Heart left ventricle (tissue), 16 donors: ENCODE measurements at regions of chr21 and their contacts with region 1.

Region 1: DNA sequence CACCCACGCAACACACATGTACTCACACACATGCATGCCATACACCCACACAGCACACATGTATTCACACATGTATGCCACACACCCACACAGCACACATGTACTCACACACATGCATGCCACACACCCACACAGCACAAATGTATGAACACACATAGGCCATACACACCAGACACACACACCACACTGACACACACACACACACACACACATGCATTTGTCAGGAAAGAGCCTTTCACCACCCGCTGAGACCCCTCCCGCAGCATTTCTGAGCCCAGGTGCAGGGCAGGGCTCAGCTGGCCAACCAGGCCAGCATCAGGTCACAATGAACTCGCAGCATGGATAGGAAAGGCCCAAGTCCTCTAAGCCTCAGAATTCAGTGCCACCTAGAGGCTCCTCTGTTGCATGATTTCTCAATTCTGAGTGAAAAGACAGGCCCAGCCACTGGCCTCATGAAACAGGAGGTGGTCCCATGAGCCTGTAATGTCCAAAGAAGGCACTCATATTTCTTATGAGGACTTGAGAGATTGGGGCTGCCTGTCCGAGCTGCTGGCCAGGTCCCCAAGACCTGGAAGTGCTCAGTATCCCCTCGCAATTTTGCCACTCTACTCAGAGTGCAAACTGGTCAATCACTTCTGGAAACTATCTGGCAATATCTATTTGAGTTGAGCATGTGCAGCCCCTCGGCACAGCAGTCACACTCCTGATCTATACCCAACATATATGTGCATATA is 57.3 kb downstream of the PSMG1 start:
- DNase-seq: peak in 4 of 5 donors; percentile 46 to 62 (median 59)
- ATAC-seq: peak; percentile 64 to 98 (median 95)
- H3K4me3 ChIP-seq: no peak overlapping the region
- H3K27ac ChIP-seq: peak overlapping the region in 2 of 12 donors; percentile 10 to 48
- H3K4me1 ChIP-seq: peaks cover 0 to 19% (median 7%) of the 10 kb centered on the region in 12 donors
- H3K27me3 ChIP-seq: no peaks in the 10 kb centered on the region
- CTCF ChIP-seq: peak; percentile 48 to 76 (median 63)
- POLR2A ChIP-seq: no peak

Region 2: DNA sequence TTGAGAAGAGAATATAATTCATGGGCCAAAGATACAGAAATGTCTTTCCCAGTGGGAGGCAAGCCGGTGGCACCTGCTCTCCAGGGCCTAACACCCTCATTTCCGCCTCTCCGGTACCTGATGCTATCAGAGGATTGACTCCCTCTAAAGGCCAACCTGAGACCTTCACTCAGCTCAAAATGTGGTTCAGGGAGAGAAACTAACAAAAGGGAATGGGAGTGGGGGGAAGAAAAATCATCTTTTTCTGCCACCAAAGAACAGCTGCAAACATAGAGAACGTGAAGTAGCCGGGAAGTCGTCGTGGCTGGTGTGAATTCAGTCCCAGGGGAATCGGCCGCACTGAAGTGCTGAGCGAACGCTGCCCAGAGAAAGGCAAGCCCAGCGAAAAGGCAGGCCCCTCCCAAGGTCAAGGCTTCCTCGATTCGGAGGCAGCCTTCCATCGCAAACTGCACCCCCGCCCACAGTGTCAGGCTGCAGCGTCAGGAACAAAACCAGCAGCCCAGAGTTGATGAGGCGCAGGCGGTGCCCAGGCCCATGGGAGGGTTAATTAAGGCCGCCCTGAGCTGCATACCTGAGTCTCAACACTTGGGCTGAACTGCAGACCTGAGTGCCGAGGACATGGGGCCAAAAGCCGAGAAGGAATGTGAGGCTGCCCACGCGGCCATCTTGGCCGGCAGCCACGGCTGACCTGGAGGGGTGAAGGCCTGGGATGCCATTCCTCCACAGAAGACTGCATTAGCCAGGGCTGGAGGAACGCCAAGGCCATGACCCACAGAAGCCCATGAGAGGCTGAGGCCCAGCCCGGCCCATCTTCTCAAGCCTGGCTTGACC is 102.8 kb before region 1 on chr21:
- intact Hi-C with region 1: loop called in 1 of 10 experiments (anchors 10 kb)
- DNase-seq: peak; percentile 78 to 89 (median 83)
- ATAC-seq: peak; percentile 80 to 92 (median 83)
- H3K4me3 ChIP-seq: peak overlapping the region in 2 of 12 donors; percentile 5 to 8
- H3K27ac ChIP-seq: peak overlapping the region; percentile 18 to 85 (median 75)
- H3K4me1 ChIP-seq: peaks cover 0 to 42% (median 31%) of the 10 kb centered on the region in 12 donors
- H3K27me3 ChIP-seq: no peaks in the 10 kb centered on the region
- CTCF ChIP-seq: peak in 9 of 12 donors; percentile 14 to 54 (median 30)
- POLR2A ChIP-seq: no peak

Region 3: GRCh38 chr21:39088831-39089380 is 37.0 kb before region 1 on chr21:
- intact Hi-C with region 1: loop called in 2 of 10 experiments (anchors 5 kb)
- DNase-seq: peak in 3 of 5 donors; percentile 48 to 75 (median 56)
- ATAC-seq: peak in 3 of 4 donors; percentile 47 to 68 (median 48)
- H3K4me3 ChIP-seq: no peak overlapping the region
- H3K27ac ChIP-seq: peak overlapping the region in 9 of 12 donors; percentile 82 to 100 (median 93)
- H3K4me1 ChIP-seq: peaks cover 0 to 76% (median 30%) of the 10 kb centered on the region in 12 donors
- H3K27me3 ChIP-seq: no peaks in the 10 kb centered on the region
- CTCF ChIP-seq: peak in 5 of 12 donors; percentile 16 to 45 (median 27)
- POLR2A ChIP-seq: no peak

Region 4: GRCh38 chr21:39105341-39105765 is 20.6 kb before region 1 on chr21:
- intact Hi-C with region 1: loop called in 1 of 10 experiments (anchors 2 kb)
- DNase-seq: no peak
- ATAC-seq: peak in 2 of 4 donors; percentile 18 to 42
- H3K4me3 ChIP-seq: no peak overlapping the region
- H3K27ac ChIP-seq: peak overlapping the region in 3 of 12 donors; percentile 1 to 78 (median 44)
- H3K4me1 ChIP-seq: peaks cover 0 to 23% (median 11%) of the 10 kb centered on the region in 12 donors
- H3K27me3 ChIP-seq: no peaks in the 10 kb centered on the region
- CTCF ChIP-seq: no peak
- POLR2A ChIP-seq: no peak